ENCODE measurements at regions of chr17 and their contacts with region 1.

Region 1: GRCh38 chr17:64129764-64130558 is at the start of gene ERN1:
- DNase-seq: peak; percentile 97
- ATAC-seq: peak; percentile 84
- H3K4me3 Mint-ChIP-seq: peak within 1 kb of the TSS; percentile 87
- H3K27ac Mint-ChIP-seq: peak within 1 kb of the TSS; percentile 96
- H3K4me1 Mint-ChIP-seq: peaks cover 54% of the 10 kb centered on the region
- H3K27me3 Mint-ChIP-seq: no peaks in the 10 kb centered on the region
- total RNA-seq, gene ERN1: 23.7 to 26.8 TPM

Region 2: DNA sequence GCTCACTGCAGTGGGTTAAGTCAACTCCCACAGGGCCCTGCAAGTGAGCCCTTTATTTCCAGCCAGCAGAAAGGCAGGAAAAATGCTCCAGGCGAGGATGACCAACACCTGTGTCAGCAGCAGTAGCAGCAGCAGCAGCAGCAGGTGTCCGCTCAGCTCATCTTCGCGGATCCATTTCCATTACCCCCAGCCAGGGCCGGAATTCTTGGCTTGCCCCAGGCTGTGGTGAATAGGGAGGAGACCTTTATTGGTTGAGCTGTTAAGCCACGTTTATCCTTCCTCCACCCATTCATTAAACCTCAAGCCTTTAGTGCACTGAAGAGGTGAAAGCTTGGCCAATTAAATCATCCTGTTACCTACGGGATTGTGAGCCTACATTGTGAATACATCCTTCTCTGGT is 1368.0 kb before region 1 on chr17:
- CTCF ChIA-PET with region 1: no interaction called
- POLR2A ChIA-PET with region 1: no interaction called
- intact Hi-C with region 1: no loop called
- DNase-seq: no peak
- ATAC-seq: no peak
- H3K4me3 Mint-ChIP-seq: no peak overlapping the region
- H3K27ac Mint-ChIP-seq: no peak overlapping the region
- H3K4me1 Mint-ChIP-seq: no peaks in the 10 kb centered on the region
- H3K27me3 Mint-ChIP-seq: peaks cover 27% of the 10 kb centered on the region

Region 3: GRCh38 chr17:63842540-63843386 is 287.2 kb before region 1 on chr17 and contains the start of gene SMARCD2:
- CTCF ChIA-PET with region 1: interaction called, 3 read pairs
- POLR2A ChIA-PET with region 1: interaction called, 3 read pairs
- intact Hi-C with region 1: loop called (anchors 1 to 2 kb)
- DNase-seq: peak; percentile 100
- ATAC-seq: peak; percentile 89
- H3K4me3 Mint-ChIP-seq: peak within 1 kb of the TSS; percentile 98
- H3K27ac Mint-ChIP-seq: peak within 1 kb of the TSS; percentile 97
- H3K4me1 Mint-ChIP-seq: peaks cover 35% of the 10 kb centered on the region
- H3K27me3 Mint-ChIP-seq: no peaks in the 10 kb centered on the region
- total RNA-seq, gene SMARCD2: 100.0 to 101 TPM

Region 4: GRCh38 chr17:63946440-63947367 is 183.3 kb before region 1 on chr17:
- CTCF ChIA-PET with region 1: interaction called, 14 read pairs
- POLR2A ChIA-PET with region 1: no interaction called
- intact Hi-C with region 1: no loop called
- DNase-seq: peak; percentile 79
- ATAC-seq: peak; percentile 95
- H3K4me3 Mint-ChIP-seq: peak overlapping the region; percentile 21
- H3K27ac Mint-ChIP-seq: peak overlapping the region; percentile 65
- H3K4me1 Mint-ChIP-seq: peaks cover 13% of the 10 kb centered on the region
- H3K27me3 Mint-ChIP-seq: no peaks in the 10 kb centered on the region

Region 5: DNA sequence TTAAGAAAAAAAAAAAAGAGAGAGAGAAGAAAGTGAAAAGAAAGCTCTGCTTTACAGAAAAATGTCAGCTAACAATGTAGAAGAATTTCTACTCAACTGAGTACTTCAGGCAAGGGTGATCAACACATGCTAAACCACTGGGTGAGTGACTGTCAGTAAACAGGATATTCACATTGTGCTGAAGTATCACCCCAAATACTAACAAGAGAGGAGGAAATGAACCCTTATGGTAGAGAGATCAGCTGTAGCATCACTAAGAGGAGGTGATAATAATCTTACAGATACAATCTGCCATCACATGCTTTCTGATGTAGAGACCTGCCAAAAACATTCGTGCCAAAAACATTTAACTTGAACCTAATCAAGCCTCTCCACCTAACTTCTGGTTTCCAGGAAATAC is 78.8 kb before region 1 on chr17:
- CTCF ChIA-PET with region 1: interaction called, 44 read pairs
- POLR2A ChIA-PET with region 1: interaction called, 3 read pairs
- intact Hi-C with region 1: no loop called
- DNase-seq: no peak
- ATAC-seq: peak; percentile 96
- H3K4me3 Mint-ChIP-seq: no peak overlapping the region
- H3K27ac Mint-ChIP-seq: peak overlapping the region; percentile 71
- H3K4me1 Mint-ChIP-seq: peaks cover 27% of the 10 kb centered on the region
- H3K27me3 Mint-ChIP-seq: no peaks in the 10 kb centered on the region

Region 6: GRCh38 chr17:64081802-64082799 is 47.9 kb before region 1 on chr17:
- CTCF ChIA-PET with region 1: interaction called, 30 read pairs
- POLR2A ChIA-PET with region 1: interaction called, 5 read pairs
- intact Hi-C with region 1: loop called (anchors 1 to 5 kb)
- DNase-seq: peak; percentile 65
- ATAC-seq: peak; percentile 87
- H3K4me3 Mint-ChIP-seq: peak overlapping the region; percentile 56
- H3K27ac Mint-ChIP-seq: no peak overlapping the region
- H3K4me1 Mint-ChIP-seq: peaks cover 28% of the 10 kb centered on the region
- H3K27me3 Mint-ChIP-seq: no peaks in the 10 kb centered on the region

Region 7: DNA sequence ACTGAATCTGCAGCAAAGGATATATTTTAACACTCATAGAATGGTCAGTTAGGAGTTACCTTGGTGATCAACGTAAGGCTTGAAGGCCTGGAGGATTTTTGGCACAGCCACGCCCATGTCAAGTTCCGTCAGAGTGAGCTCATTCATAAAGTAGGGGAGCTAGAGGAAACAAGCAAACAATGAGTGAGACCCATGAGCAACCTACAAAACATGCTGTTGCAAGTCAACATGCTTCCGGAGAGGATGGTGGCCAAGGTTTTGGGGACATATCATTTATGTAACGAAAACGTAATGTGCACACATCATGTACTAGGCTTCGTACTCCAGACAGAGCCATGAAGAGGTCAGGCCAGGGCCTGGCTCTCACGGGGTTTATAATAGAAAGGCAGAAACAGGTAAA is 41.1 kb after region 1 on chr17:
- CTCF ChIA-PET with region 1: no interaction called
- POLR2A ChIA-PET with region 1: no interaction called
- intact Hi-C with region 1: no loop called
- DNase-seq: no peak
- ATAC-seq: no peak
- H3K4me3 Mint-ChIP-seq: no peak overlapping the region
- H3K27ac Mint-ChIP-seq: no peak overlapping the region
- H3K4me1 Mint-ChIP-seq: no peaks in the 10 kb centered on the region
- H3K27me3 Mint-ChIP-seq: no peaks in the 10 kb centered on the region

Region 8: DNA sequence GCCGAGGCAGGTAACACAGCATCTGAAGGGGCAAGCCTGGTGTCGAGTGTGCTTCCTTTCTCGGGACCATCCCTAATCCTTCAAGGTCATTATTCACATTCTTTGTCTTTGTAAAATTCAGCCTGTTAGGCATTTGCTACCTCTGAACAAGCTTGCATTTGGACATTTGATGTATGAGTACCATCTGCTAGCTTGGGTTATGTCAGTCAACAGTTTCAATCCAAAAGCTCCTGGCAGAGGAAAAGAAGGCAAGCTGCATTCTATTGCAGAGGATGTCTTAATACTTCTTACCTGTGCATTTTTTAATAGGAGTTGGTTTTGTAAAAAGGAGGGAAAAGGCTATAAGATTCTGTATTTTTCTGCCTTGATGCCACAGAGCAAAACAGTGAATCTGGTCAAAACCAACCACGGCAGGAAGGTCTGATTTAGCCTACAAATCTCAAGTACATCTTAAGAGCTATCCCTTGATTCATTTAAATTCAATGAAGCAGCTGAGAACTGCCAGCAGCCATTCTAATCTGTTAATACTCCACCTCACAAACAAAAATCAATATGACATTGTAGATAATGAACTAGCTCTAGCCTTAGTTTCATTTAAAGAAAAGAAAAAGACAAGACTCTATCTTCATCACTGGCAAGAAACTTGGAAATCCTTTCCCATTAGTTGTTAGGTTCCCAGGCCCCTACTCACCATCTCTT is 94.1 kb after region 1 on chr17:
- CTCF ChIA-PET with region 1: no interaction called
- POLR2A ChIA-PET with region 1: no interaction called
- intact Hi-C with region 1: no loop called
- DNase-seq: no peak
- ATAC-seq: no peak
- H3K4me3 Mint-ChIP-seq: no peak overlapping the region
- H3K27ac Mint-ChIP-seq: no peak overlapping the region
- H3K4me1 Mint-ChIP-seq: peaks cover 4% of the 10 kb centered on the region
- H3K27me3 Mint-ChIP-seq: no peaks in the 10 kb centered on the region

Region 9: DNA sequence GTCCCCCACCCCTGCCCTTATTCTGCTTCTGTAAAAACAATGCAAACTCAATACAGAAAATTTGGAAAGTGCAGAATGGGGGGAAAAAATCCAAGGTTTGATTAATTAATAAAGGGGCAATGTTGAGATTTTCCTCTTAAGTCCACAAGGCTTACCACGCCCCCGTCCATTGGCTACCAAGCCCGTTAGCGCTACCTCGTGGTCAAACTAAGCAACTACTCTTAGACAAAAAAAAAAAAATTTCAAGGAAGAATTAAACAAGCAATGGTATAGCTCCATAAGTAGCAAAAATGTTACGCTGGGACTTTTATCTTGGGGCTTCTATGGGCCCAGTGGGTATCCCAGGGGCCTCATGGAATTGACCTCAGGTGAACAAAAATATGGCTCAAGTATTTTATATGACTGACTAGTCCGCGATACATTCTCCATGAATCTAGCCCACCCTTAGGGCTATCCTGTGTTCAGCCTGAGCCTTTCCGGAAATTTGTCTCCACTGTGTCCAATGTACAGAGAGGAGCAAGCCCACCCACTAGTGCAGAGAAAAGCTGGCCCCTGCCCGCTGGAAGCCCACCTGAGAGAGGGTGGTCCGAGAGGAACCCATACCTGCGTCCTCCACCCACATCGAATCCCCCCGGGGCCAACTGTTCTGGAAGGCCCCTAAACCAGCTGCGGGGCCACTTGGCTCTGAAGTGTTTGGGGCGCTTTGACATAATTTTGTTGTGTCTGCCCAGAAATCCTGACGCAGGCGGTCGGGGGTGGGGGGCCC is 152.2 kb after region 1 on chr17:
- CTCF ChIA-PET with region 1: interaction called, 13 read pairs
- POLR2A ChIA-PET with region 1: no interaction called
- intact Hi-C with region 1: loop called in 1 of 2 experiments (anchors 5 kb)
- DNase-seq: peak; percentile 76
- ATAC-seq: peak; percentile 51
- H3K4me3 Mint-ChIP-seq: no peak overlapping the region
- H3K27ac Mint-ChIP-seq: no peak overlapping the region
- H3K4me1 Mint-ChIP-seq: no peaks in the 10 kb centered on the region
- H3K27me3 Mint-ChIP-seq: no peaks in the 10 kb centered on the region

Region 10: GRCh38 chr17:64315032-64315490 is 185.1 kb after region 1 on chr17:
- CTCF ChIA-PET with region 1: no interaction called
- POLR2A ChIA-PET with region 1: no interaction called
- intact Hi-C with region 1: no loop called
- DNase-seq: no peak
- ATAC-seq: no peak
- H3K4me3 Mint-ChIP-seq: no peak overlapping the region
- H3K27ac Mint-ChIP-seq: no peak overlapping the region
- H3K4me1 Mint-ChIP-seq: no peaks in the 10 kb centered on the region
- H3K27me3 Mint-ChIP-seq: no peaks in the 10 kb centered on the region

Measured in activated CD4-positive, alpha-beta T cell treated with anti-CD3 and anti-CD28 coated beads for 36 hours (primary cell).